Heart right ventricle (tissue), 16 donors: ENCODE measurements at regions of chr1 and their contacts with region 1.

Region 1: GRCh38 chr1:162069328-162070093 is at the start of gene NOS1AP:
- DNase-seq: peak; percentile 69 to 84
- ATAC-seq: peak; percentile 95 to 99 (median 96)
- H3K4me3 ChIP-seq: peak within 1 kb of the TSS; percentile 44 to 73 (median 66)
- H3K27ac ChIP-seq: peak within 1 kb of the TSS in 8 of 10 donors; percentile 57 to 85 (median 66)
- H3K4me1 ChIP-seq: peaks cover 0 to 38% (median 15%) of the 10 kb centered on the region in 9 donors
- H3K27me3 ChIP-seq: peaks cover 0 to 76% (median 5%) of the 10 kb centered on the region in 7 donors
- CTCF ChIP-seq: peak in 1 of 9 donors; percentile 12
- total RNA-seq, gene NOS1AP: 1.7 to 7.1 (median 4.7) TPM

Region 2: GRCh38 chr1:162028726-162029125 is 40.8 kb before region 1 on chr1:
- intact Hi-C with region 1: no loop called
- DNase-seq: no peak
- ATAC-seq: peak in 1 of 8 donors; percentile 40
- H3K4me3 ChIP-seq: no peak overlapping the region
- H3K27ac ChIP-seq: no peak overlapping the region
- H3K4me1 ChIP-seq: peaks cover 0 to 43% (median 7%) of the 10 kb centered on the region in 9 donors
- H3K27me3 ChIP-seq: peaks cover 0 to 36% (median 11%) of the 10 kb centered on the region in 7 donors
- CTCF ChIP-seq: no peak

Region 3: GRCh38 chr1:162117039-162117774 is 47.7 kb after region 1 on chr1:
- intact Hi-C with region 1: no loop called
- DNase-seq: no peak
- ATAC-seq: no peak
- H3K4me3 ChIP-seq: no peak overlapping the region
- H3K27ac ChIP-seq: no peak overlapping the region
- H3K4me1 ChIP-seq: peaks cover 0 to 9% (median 0%) of the 10 kb centered on the region in 9 donors
- H3K27me3 ChIP-seq: no peaks in the 10 kb centered on the region
- CTCF ChIP-seq: no peak

Region 4: GRCh38 chr1:162136760-162137159 is 67.2 kb after region 1 on chr1:
- intact Hi-C with region 1: loop called in 2 of 10 experiments (anchors 5 to 10 kb)
- DNase-seq: no peak
- ATAC-seq: peak in 3 of 8 donors; percentile 40 to 52 (median 42)
- H3K4me3 ChIP-seq: no peak overlapping the region
- H3K27ac ChIP-seq: no peak overlapping the region
- H3K4me1 ChIP-seq: peaks cover 0 to 63% (median 25%) of the 10 kb centered on the region in 9 donors
- H3K27me3 ChIP-seq: no peaks in the 10 kb centered on the region
- CTCF ChIP-seq: no peak

Region 5: GRCh38 chr1:162276493-162276892 is 207.0 kb after region 1 on chr1:
- intact Hi-C with region 1: loop called in 2 of 10 experiments (anchors 5 kb)
- DNase-seq: no peak
- ATAC-seq: peak in 2 of 8 donors; percentile 38 to 48
- H3K4me3 ChIP-seq: no peak overlapping the region
- H3K27ac ChIP-seq: no peak overlapping the region
- H3K4me1 ChIP-seq: peaks cover 0 to 8% (median 0%) of the 10 kb centered on the region in 9 donors
- H3K27me3 ChIP-seq: peaks cover 0 to 6% (median 0%) of the 10 kb centered on the region in 7 donors
- CTCF ChIP-seq: peak in 7 of 9 donors; percentile 32 to 58 (median 48)